ENCODE measurements at regions of chr15 and their contacts with region 1.

Region 1: GRCh38 chr15:37824717-37825382 is 109.6 kb upstream of the TMCO5A start:
- DNase-seq: no peak
- H3K4me3 ChIP-seq: no peak overlapping the region
- H3K27ac ChIP-seq: no peak overlapping the region
- H3K4me1 ChIP-seq: peaks cover 14 to 18% of the 10 kb centered on the region in 2 donors
- H3K27me3 ChIP-seq: no peaks in the 10 kb centered on the region
- CTCF ChIP-seq: no peak
- POLR2A ChIP-seq: no peak

Region 2: GRCh38 chr15:37517191-37517895 is 307.5 kb before region 1 on chr15:
- intact Hi-C with region 1: no loop called
- DNase-seq: no peak
- H3K4me3 ChIP-seq: no peak overlapping the region
- H3K27ac ChIP-seq: no peak overlapping the region
- H3K4me1 ChIP-seq: no peaks in the 10 kb centered on the region
- H3K27me3 ChIP-seq: no peaks in the 10 kb centered on the region
- CTCF ChIP-seq: no peak
- POLR2A ChIP-seq: no peak

Region 3: GRCh38 chr15:37698679-37699078 is 126.2 kb before region 1 on chr15:
- intact Hi-C with region 1: no loop called
- DNase-seq: no peak
- H3K4me3 ChIP-seq: no peak overlapping the region
- H3K27ac ChIP-seq: no peak overlapping the region
- H3K4me1 ChIP-seq: no peaks in the 10 kb centered on the region
- H3K27me3 ChIP-seq: no peaks in the 10 kb centered on the region
- CTCF ChIP-seq: no peak
- POLR2A ChIP-seq: no peak

Region 4: DNA sequence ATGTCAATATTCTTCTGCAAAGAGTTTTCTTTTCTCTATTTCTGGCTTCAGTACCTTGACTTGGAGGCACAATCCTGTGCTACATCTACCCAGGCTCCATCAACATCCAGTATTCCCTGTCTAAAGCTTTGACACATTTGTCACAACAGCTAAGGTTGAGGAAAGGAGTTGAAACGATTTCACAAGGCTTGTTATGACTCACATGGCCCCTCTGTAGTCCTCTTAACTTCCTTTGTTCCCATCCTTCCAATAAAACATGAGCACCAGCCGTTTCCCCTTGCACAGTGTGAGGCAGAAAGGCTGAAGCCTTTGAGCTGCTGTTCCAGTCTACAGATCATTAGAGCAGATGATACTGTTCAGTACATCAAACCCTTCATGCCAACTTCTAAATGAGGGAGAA is 53.4 kb before region 1 on chr15:
- intact Hi-C with region 1: loop called (anchors 5 kb)
- DNase-seq: no peak
- H3K4me3 ChIP-seq: no peak overlapping the region
- H3K27ac ChIP-seq: no peak overlapping the region
- H3K4me1 ChIP-seq: no peaks in the 10 kb centered on the region
- H3K27me3 ChIP-seq: no peaks in the 10 kb centered on the region
- CTCF ChIP-seq: no peak
- POLR2A ChIP-seq: no peak